ENCODE measurements at regions of chr19 and their contacts with region 1.

Region 1: DNA sequence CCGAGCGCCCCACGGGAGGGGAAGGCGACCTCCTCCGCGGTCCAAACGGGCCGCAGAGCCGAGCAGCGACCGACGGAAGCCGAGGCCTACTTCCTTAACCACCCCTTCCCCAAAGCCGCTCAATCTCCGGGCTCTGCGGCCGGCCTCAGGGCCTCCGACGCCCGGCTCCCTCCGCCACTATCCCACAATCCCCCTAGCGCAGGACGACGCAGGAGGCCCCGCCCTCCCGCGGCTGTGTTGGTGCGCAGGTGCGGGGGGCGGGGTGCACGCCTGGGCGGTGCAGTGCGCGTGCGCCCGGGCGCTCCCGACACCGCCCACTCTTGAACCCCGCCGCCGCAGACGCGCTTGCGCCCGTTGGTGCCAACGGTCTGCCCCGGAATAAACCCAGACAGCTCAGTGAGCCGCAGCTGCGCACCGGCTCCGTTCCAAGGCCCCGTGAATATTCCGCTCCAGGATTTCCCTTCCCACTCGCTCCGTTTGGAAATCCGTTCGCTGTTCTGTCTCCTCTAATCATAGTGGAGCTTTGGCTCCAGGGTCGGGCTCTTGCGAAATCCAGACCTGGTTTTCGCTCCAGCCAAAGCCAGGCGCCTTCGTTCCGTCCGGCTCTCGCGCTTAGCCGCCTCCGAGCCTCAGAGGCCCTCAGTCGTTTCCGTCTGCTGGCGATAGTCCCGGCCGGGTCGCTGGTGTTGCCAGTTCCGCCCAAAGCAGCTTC is at the start of gene PPP6R1:
- DNase-seq: peak; percentile 94 to 99 (median 96)

Region 2: DNA sequence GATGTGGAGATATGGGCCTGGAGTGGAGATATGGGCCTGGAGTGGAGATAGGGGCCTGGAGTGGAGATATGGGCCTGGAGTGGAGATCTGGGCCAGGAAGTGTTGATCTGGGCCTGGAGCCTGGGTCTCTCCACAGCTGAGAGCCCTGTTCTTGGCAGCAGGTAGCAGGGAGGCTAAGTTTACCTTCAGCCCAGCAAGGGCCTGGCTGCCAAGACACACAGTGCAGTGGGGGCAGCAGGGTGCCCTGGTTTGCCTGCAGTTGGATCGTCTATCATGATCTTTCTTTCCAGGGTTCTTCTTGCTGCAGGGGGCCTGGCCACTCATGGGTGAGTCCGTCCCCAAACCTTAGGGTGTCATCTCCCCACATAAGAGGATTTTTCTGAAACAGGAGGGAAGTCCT is 408.1 kb before region 1 on chr19:
- intact Hi-C with region 1: no loop called
- DNase-seq: no peak

Region 3: GRCh38 chr19:55279770-55280643 is 21.0 kb after region 1 on chr19 and contains the start of gene HSPBP1:
- intact Hi-C with region 1: loop called (anchors 1 kb)
- DNase-seq: peak; percentile 86 to 99 (median 92)

Region 4: DNA sequence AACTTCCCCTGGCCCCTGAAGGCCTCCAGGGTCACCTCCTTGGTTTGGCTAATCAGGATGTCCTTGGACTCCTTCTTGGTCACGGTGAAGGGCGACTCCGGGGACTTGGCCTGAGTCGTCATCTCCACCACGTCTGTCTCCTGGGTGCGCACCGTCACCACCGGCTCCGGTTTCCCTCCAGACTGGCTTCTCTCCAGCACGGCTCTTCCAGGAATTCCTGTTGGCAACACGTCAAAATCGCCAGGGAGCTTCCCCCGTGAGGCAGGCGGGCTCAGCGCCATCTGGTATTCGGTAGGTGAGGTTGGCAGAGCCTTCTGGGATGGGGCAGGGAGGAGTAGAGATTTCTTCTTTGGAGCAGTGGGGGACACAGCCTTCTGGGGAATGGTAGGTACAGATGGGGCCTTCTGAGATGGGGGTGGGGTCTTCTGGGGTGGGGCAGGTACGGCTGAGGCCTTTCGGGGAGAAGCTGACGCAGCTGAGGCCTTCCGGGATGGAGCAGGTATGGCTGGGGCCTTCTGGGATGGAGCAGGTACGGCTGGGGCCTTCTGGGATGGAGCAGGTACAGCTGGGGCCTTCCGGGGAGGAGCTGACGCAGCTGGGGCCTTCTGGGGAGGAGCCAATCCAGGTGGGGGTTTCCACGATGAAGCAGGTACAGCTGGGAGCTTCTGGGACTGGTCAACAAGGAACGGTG is 100.1 kb after region 1 on chr19:
- intact Hi-C with region 1: no loop called
- DNase-seq: no peak